ENCODE measurements at regions of chr10 and their contacts with region 1.

Region 1: DNA sequence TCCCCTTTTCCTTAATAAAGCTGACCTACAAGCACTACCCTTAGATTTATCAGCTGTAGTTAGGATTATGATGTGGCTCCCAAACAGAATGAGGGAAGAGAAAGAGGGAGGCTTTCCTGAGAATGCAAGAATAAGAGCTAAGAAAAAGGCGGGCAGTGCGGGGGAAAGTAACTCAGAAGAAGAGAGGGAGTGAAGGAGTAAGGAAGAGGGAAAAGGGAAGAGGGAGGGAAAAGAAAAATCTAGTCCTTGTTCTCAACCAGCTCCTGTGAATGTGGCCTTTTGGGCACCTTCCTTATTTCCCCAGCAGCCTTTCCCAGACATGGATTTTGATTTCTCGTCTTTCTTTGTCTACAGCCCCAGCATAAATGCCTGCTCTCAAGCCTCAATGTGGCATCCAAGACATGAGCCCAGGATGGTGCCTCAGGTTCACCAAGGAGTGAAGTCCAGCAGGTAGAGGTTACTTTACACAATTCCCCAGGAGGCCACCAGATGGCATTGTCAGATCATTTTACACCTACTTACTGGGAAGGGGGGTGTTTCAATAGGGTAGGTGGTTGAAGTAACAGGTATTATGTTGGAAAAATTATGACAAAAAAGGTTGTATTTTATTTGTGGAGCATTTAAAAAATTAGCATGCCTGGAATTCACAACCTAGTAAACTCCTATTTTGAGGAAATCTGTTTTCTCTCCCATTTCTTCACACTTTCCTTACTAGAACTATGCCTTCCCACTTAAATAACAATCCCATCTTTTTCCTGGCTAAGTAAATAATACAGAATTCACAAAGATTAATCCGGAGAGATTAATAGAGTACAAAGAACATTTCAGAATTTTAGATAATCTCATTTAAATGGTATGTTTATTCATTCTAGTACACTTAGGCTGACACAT is 106.5 kb downstream of the HTR7 start:
- DNase-seq: peak; percentile 13
- H3K4me3 Mint-ChIP-seq: no peak overlapping the region
- H3K27ac Mint-ChIP-seq: no peak overlapping the region
- H3K4me1 Mint-ChIP-seq: no peaks in the 10 kb centered on the region
- H3K27me3 Mint-ChIP-seq: peaks cover 31% of the 10 kb centered on the region

Region 2: GRCh38 chr10:90862908-90863514 is 111.7 kb after region 1 on chr10:
- intact Hi-C with region 1: loop called (anchors 1 kb)
- DNase-seq: no peak
- H3K4me3 Mint-ChIP-seq: no peak overlapping the region
- H3K27ac Mint-ChIP-seq: no peak overlapping the region
- H3K4me1 Mint-ChIP-seq: peaks cover 10% of the 10 kb centered on the region
- H3K27me3 Mint-ChIP-seq: peaks cover 83% of the 10 kb centered on the region